Panc1 (cell line): ENCODE measurements at regions of chr1 and their contacts with region 1.

Region 1: DNA sequence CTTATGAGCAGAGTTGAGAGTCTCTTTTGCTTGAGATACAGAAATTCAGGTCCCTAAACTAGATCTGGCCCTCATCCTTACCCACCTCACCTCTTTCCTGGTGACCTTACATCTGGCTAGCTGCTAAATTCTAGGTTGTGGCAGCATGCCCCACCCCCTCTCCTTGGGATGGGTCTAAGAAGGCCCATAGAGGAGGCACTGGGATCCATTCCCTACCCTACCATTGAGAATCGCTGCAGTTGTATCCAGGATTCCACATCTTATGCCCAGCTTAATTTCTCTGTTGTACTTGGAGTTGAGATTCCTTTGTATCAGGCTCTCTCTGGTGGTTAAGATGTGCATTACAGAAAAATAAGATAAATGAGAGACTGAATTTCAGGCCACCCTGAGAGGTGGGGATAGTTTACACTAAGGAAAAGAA is 9.5 kb upstream of the TMEM39B start:
- DNase-seq: peak; percentile 48
- ATAC-seq: peak; percentile 56
- H3K4me3 ChIP-seq: no peak overlapping the region
- H3K27ac ChIP-seq: no peak overlapping the region
- H3K4me1 ChIP-seq: peaks cover 4% of the 10 kb centered on the region; the same call in 1 of the 2 replicates
- H3K27me3 ChIP-seq: no peaks in the 10 kb centered on the region
- CTCF ChIP-seq: peak; percentile 66

Region 2: GRCh38 chr1:31822766-31823165 is 240.5 kb before region 1 on chr1:
- CTCF ChIA-PET with region 1: interaction called, 10 read pairs
- POLR2A ChIA-PET with region 1: no interaction called
- in situ Hi-C with region 1: no loop called
- intact Hi-C with region 1: no loop called
- DNase-seq: no peak
- ATAC-seq: no peak; the same call in 1 of the 2 replicates
- H3K4me3 ChIP-seq: no peak overlapping the region
- H3K27ac ChIP-seq: no peak overlapping the region
- H3K4me1 ChIP-seq: no peaks in the 10 kb centered on the region
- H3K27me3 ChIP-seq: no peaks in the 10 kb centered on the region
- CTCF ChIP-seq: no peak

Region 3: DNA sequence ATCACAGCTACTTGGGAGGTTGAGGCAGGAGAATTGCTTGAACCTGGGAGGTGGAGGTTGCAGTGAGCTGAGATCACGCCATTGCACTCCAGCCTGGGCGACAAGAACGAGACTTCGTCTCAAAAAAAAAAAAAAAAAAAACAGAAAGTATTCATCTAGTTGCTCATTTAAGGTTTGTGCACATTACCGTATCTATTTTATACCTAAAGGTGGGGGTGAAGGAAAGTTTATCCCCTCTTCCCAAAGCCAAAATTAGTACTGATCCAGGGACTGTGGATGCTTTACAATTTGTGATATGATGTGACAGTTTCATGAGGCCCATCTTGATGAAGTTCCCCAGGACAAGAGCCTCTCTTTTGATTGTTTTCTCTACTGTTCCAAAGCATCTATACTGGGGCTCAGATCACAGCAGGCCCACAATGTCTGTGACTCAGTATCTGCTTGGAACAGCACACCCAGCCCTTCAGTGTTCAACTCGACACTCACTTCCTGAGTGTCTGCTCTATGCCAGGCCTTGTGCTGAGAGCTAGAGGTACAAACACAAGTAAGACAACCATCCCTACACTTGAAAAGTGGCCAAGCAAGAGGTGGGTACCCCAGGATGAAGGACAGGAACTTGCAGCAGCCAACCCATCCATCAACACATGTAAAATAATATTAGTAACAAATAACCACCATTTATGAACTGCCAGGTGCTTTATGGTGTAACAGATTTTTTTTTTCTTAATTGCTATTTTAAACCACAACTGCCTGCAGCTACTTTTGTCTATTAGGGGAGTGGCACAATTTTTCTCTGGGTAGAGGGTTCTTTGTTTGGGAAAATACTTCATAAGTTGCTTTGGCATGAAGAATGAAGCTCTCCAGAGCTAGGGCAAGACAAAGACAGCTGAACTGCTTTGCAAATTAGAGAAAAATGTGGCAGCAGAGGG is 78.6 kb before region 1 on chr1:
- CTCF ChIA-PET with region 1: no interaction called
- POLR2A ChIA-PET with region 1: no interaction called
- in situ Hi-C with region 1: no loop called
- intact Hi-C with region 1: no loop called
- DNase-seq: no peak
- ATAC-seq: 0 out of 2 replicates have a peak, but pooled peaks have one; percentile 48
- H3K4me3 ChIP-seq: no peak overlapping the region
- H3K27ac ChIP-seq: no peak overlapping the region
- H3K4me1 ChIP-seq: peaks cover 3% of the 10 kb centered on the region; the same call in 1 of the 2 replicates
- H3K27me3 ChIP-seq: no peaks in the 10 kb centered on the region
- CTCF ChIP-seq: no peak

Region 4: DNA sequence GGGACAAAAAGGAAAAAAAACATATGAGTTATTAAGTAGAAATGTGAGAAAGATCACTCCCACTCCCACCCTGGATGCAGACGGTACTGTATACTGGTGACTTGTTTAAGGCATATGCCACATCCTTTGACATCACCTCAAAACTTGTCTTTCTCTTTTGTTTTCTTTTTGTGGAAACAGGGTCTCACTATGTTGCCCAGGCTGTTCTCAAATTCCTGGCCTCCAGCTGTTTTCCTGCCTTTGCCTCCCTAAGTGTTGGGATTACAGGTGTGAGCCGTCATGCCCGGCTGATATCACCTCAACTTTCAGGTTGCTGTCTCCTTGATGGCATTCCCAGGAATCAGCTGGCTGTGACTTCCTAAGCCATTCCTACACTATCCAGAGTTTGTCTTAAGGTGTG is 68.0 kb before region 1 on chr1:
- CTCF ChIA-PET with region 1: no interaction called
- POLR2A ChIA-PET with region 1: interaction called, 14 read pairs
- in situ Hi-C with region 1: no loop called
- intact Hi-C with region 1: no loop called
- DNase-seq: no peak
- ATAC-seq: no peak
- H3K4me3 ChIP-seq: no peak overlapping the region
- H3K27ac ChIP-seq: no peak overlapping the region
- H3K4me1 ChIP-seq: no peaks in the 10 kb centered on the region
- H3K27me3 ChIP-seq: no peaks in the 10 kb centered on the region
- CTCF ChIP-seq: no peak

Region 5: DNA sequence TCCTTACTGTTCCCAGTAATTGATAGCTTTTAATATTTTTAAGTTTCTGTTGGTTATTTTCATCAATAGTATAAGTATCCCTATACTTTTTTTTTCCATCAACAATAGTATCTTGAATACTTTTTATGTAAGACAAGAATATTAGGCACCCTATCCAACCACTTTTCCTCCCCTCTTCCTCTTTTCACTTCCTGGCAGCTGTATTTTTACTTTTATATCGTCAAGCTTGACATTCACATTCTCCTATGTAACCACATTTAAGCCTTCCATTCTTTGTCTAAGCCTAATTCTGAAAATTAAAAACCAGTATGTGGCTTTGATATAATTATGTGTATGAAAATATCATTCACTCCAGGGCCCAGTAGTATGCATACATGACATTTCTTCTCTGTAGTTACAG is 18.8 kb after region 1 on chr1:
- CTCF ChIA-PET with region 1: interaction called, 13 read pairs
- POLR2A ChIA-PET with region 1: no interaction called
- in situ Hi-C with region 1: no loop called
- intact Hi-C with region 1: no loop called
- DNase-seq: no peak
- ATAC-seq: no peak
- H3K4me3 ChIP-seq: no peak overlapping the region
- H3K27ac ChIP-seq: no peak overlapping the region
- H3K4me1 ChIP-seq: no peaks in the 10 kb centered on the region
- H3K27me3 ChIP-seq: no peaks in the 10 kb centered on the region
- CTCF ChIP-seq: no peak

Region 6: GRCh38 chr1:32580348-32581017 is 517.2 kb after region 1 on chr1:
- CTCF ChIA-PET with region 1: no interaction called
- POLR2A ChIA-PET with region 1: no interaction called
- in situ Hi-C with region 1: no loop called
- intact Hi-C with region 1: no loop called
- DNase-seq: no peak
- ATAC-seq: no peak
- H3K4me3 ChIP-seq: no peak overlapping the region
- H3K27ac ChIP-seq: no peak overlapping the region
- H3K4me1 ChIP-seq: no peaks in the 10 kb centered on the region
- H3K27me3 ChIP-seq: no peaks in the 10 kb centered on the region
- CTCF ChIP-seq: no peak